Left colon (tissue), 2 donors: ENCODE measurements at regions of chr1 and their contacts with region 1.

Region 1: GRCh38 chr1:31663622-31664452 is 19.2 kb upstream of the PEF1 start:
- DNase-seq: peak; percentile 34 to 68
- ATAC-seq: no peak

Region 2: DNA sequence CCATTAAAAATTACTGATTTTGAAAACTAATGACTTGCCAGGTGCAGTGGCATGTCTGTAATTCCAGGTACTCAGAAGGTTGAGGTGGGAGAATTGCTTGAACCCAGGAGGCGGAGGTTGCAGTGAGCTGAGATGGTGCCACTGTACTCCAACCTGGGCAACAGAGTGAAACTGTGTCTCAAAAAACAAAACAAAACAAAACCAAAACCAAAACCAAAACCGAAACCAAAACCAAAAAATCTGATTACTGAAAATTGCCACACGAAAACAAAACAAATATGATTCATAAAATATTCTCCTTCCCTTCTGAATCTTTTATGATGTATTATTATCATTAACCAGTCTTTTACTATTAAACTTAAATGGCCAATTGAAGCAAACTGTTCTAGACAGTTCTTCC is 176.7 kb before region 1 on chr1:
- intact Hi-C with region 1: no loop called
- DNase-seq: no peak
- ATAC-seq: no peak

Region 3: DNA sequence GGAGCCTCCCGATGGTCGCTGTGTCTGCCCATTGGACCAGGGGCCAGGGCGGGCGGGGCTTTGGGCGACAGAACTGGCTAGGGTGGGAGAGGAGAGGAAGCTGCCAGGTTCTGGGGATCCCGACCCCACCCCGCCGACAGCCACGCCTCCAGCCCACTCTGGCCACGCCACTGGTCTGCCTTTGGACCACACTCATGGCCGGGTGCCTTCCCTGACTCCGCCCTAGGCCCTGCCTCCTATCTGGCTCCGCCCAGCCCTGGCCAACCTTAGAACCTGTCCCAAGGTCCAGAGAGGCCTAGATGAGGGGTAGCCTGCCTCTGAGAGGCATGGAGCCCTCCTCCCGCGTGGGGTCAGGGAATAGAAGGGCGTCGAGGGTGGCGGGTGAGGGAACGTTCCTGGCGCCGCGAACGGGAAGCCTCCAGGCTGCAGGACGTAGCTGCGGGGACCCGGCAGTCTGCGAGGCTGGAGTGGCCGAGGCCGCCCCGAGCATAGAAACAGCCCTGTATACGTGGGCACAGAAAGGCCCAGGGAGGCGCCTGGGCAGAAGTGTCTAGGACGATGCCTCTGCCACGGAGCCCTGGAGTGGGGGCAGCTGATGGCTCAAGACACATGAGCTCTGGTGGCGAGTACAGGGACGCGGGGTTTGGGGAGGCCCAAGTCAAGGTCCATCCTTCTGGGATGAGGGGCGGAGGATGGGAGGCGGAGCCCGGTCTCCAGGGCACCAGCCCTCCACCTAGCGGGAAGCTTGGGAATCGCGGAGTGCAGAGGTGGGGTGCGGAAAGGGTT is 51.4 kb after region 1 on chr1:
- intact Hi-C with region 1: loop called in 1 of 2 experiments (anchors 10 kb)
- DNase-seq: peak; percentile 88 to 96
- ATAC-seq: peak; percentile 91

Region 4: DNA sequence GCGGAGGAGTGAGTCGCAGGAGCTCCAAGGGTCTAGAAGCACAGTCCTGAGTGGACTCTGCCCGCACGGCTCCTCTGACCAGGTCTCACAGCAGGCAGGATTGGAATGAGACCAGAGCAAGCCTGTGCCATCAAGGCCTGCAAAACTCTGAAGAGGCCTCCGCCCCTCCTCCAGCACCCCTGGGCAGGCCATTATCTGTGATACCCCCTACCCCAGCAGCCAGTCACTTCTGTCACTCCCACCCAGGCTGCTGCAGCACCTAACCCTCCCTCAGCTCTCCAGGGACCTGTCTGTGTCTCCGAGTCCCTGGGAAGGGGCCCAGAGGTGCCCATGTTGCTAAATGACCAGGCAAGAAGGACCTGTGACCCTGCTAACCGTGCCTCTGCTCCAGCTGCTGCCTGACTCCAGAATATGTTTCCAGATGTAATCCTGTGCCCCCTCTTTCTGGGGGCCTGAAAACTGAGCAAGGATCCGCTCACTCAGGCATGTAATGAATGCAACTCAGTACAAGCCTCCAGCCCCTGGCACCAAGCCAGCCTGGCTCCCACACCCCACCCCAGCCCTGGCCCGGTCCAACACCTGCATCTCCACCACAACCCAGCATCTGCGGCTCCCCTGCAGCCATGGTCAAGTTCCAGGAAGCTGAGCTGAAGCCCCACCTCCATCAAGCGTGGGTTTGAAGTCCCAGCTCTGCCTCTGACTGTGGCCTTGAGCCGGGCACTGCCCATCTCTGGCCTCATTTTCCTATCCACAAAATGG is 62.1 kb after region 1 on chr1:
- intact Hi-C with region 1: no loop called
- DNase-seq: peak; percentile 41 to 49
- ATAC-seq: no peak

Region 5: DNA sequence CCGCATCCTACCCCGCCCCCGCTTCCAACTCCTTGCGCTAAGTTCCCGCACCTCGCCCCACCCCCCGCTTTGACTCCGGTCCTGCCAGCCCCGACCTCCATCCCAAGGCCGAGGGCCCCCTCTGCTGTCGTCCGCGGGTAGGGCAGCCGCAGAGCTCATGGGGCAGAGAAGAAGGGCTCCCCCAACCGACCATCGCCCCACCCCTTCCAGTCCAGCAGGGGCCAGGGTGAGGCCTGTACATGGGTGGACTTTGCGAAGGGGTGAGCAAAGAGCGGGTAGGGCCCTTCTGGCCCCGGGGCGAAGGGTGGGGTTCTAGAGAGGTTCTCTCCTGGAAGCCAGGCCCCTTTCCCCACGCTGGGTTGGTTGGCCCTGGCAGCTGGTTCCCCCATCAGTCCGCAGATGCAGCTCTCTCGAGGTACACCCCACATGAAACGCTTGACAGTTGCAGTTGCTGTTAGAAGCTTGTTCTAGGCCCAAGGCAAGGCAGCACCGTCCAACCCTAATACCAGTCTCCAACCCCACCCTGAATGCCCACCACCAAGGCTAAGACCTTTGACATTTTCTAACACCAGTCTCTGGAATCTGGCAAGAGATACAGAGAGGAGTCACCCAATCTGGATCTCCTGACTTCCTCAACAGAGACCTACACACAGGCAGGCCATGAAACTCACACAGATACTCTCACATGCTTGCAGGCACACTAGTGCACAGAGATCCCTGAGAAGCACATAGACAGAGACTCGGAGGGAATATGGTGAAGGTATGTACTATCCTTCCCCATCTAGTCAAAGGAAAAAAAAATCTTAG is 125.6 kb after region 1 on chr1:
- intact Hi-C with region 1: loop called (anchors 5 to 10 kb)
- DNase-seq: peak; percentile 93 to 99
- ATAC-seq: peak; percentile 86